ENCODE measurements at regions of chr14 and their contacts with region 1.

Region 1: GRCh38 chr14:36373982-36374673 is 53.7 kb upstream of the MBIP start:
- DNase-seq: peak; percentile 90
- ATAC-seq: peak; percentile 98
- H3K4me3 Mint-ChIP-seq: no peak overlapping the region
- H3K27ac Mint-ChIP-seq: no peak overlapping the region
- H3K4me1 Mint-ChIP-seq: no peaks in the 10 kb centered on the region
- H3K27me3 Mint-ChIP-seq: peaks cover 19% of the 10 kb centered on the region
- CTCF ChIP-seq: peak; percentile 86

Region 2: DNA sequence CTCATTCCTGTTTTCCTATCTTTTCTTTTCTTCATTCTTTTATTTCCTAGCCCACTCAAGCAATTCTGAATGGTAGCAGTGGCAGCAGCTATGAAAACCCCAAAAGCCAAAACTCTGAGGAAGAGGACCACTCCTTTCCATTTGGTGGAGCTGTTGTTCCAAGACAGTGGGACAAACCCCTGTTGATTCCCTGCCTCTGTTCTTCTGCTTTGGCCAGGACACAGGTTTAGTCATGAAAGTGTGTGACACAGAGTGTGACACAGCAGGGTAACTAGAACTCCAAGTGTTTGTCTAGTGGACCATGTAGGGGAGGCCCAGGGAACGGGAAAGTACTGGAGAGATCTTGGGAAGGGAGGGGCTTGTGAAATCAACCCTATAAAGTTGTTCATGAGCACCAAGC is 268.7 kb before region 1 on chr14:
- CTCF ChIA-PET with region 1: interaction called, 24 read pairs
- POLR2A ChIA-PET with region 1: no interaction called
- DNase-seq: peak; percentile 21
- ATAC-seq: peak; percentile 92
- H3K4me3 Mint-ChIP-seq: no peak overlapping the region
- H3K27ac Mint-ChIP-seq: no peak overlapping the region
- H3K4me1 Mint-ChIP-seq: no peaks in the 10 kb centered on the region
- H3K27me3 Mint-ChIP-seq: no peaks in the 10 kb centered on the region
- CTCF ChIP-seq: no peak

Measured in WTC11 (cell line).